ENCODE measurements at regions of chr10 and their contacts with region 1.

Region 1: DNA sequence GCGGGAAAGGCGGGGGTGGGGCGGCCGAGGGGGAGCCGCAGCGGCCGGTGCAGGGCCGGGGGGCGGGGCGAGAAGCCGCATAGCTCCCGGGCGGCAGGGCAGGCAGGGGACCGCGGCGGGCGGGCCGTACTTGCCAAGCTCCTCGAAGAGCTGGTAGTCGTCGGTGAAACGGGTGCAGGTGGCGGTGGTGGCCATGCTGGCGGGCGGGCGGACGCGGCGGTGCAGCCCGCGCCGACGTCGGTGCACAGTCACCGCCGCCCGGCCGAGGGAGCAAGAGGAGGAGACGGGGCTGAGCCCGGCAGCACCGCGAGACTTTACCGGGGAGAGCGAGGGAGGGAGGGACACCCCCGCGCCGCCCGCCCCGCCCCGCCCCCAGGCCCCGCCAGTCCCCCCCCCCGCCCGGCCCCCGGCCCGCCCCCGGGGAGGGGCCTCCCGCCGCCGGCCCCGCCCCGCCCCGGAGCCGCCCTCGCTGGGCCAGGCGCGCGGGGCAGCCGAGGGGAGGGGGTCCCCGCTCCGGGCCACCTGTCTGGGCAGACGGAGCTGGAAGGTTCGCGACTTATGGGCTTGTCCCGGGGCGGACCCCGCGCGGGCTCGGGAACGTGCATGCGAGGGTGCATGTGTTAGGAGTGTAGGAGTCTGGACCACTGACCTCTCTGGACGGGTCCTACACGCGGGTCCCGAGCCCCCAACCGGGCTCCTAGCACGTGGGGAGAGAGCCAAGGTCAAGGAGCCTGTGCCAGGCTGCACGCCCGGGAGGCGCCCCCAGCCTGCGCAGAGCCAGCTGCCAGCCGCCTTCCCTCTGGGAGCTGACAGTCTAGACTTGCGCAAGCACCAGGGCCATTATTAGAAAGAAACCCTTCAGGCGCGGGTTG is at the start of gene CAMK2G:
- DNase-seq: peak; percentile 76 to 91 (median 82)
- H3K4me3 ChIP-seq: peak within 1 kb of the TSS; percentile 69
- H3K4me3 Mint-ChIP-seq: peak within 1 kb of the TSS; percentile 85 to 98 (median 89)
- H3K27ac ChIP-seq: peak within 1 kb of the TSS; percentile 78
- H3K27ac Mint-ChIP-seq: peak within 1 kb of the TSS; percentile 86 to 97 (median 92)
- H3K4me1 ChIP-seq: peaks cover 57% of the 10 kb centered on the region
- H3K4me1 Mint-ChIP-seq: peaks cover 50 to 78% (median 52%) of the 10 kb centered on the region in 3 donors
- H3K27me3 ChIP-seq: no peaks in the 10 kb centered on the region
- H3K27me3 Mint-ChIP-seq: no peaks in the 10 kb centered on the region
- total RNA-seq, gene CAMK2G: 17.3 to 17.5 TPM

Region 2: GRCh38 chr10:73723516-73723915 is 151.0 kb before region 1 on chr10:
- CTCF ChIA-PET with region 1: no interaction called
- POLR2A ChIA-PET with region 1: no interaction called
- DNase-seq: no peak
- H3K4me3 ChIP-seq: no peak overlapping the region
- H3K4me3 Mint-ChIP-seq: no peak overlapping the region
- H3K27ac ChIP-seq: no peak overlapping the region
- H3K27ac Mint-ChIP-seq: no peak overlapping the region
- H3K4me1 ChIP-seq: no peaks in the 10 kb centered on the region
- H3K4me1 Mint-ChIP-seq: peaks cover 0 to 4% (median 2%) of the 10 kb centered on the region in 3 donors
- H3K27me3 ChIP-seq: no peaks in the 10 kb centered on the region
- H3K27me3 Mint-ChIP-seq: peaks cover 0 to 1% of the 10 kb centered on the region in 2 donors

Region 3: GRCh38 chr10:73859428-73859783 is 15.1 kb before region 1 on chr10:
- CTCF ChIA-PET with region 1: interaction called, 289 read pairs
- POLR2A ChIA-PET with region 1: interaction called, 10 read pairs
- DNase-seq: peak in 4 of 5 donors; percentile 31 to 67 (median 50)
- H3K4me3 ChIP-seq: peak overlapping the region; percentile 5
- H3K4me3 Mint-ChIP-seq: peak overlapping the region in 6 of 7 donors; percentile 47 to 82 (median 68)
- H3K27ac ChIP-seq: peak overlapping the region; percentile 21
- H3K27ac Mint-ChIP-seq: peak overlapping the region; percentile 70 to 98 (median 92)
- H3K4me1 ChIP-seq: peaks cover 63% of the 10 kb centered on the region
- H3K4me1 Mint-ChIP-seq: peaks cover 67 to 90% (median 80%) of the 10 kb centered on the region in 3 donors
- H3K27me3 ChIP-seq: no peaks in the 10 kb centered on the region
- H3K27me3 Mint-ChIP-seq: no peaks in the 10 kb centered on the region